Activated naive CD4-positive, alpha-beta T cell treated with anti-CD3 and anti-CD28 coated beads for 36 hours (primary cell): ENCODE measurements at regions of chr14 and their contacts with region 1.

Region 1: DNA sequence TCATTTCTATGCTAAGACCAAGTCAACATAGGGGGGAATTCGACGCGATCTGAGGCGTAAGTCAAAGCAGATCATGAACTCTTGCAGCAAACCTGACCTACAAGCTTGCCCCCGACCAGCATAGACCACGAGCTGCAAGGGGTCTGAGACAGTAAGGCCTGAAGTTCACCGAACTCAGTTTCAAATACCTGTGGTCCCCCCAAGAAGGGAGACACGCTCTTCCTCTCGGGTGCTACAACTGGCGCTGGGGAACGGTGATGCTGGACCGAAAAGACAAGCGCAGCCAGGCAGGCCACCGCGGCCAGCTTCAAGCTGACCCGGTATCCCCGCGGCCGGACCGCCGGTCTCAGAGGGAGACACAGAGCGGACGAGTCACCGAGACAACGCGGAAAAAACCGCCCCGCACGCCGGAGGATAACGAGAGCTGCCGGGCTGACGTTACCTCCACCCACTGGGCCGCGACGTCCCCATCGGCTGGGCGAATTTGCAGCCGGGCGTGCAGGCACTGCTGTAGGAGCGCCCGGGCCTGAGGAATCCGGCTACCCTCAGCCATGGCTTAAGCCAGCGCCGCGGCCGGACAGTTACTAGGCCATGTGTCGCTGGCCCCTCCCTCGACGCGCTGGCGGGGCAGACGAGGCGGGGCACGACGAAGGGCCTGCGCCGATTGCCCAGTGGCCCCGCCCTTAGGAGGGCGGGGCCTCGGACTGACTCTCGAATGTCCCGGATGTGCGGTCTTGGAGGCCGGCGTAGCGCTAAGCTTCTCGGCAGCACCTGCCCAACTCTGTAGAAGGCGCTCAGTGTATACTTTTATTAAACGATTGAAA is at the start of gene DTD2:
- DNase-seq: peak; percentile 93
- H3K4me3 Mint-ChIP-seq: peak within 1 kb of the TSS; percentile 94
- H3K27ac Mint-ChIP-seq: peak within 1 kb of the TSS; percentile 88
- H3K4me1 Mint-ChIP-seq: peaks cover 29% of the 10 kb centered on the region
- H3K27me3 Mint-ChIP-seq: no peaks in the 10 kb centered on the region
- total RNA-seq, gene DTD2: 12.9 to 13.3 TPM

Region 2: DNA sequence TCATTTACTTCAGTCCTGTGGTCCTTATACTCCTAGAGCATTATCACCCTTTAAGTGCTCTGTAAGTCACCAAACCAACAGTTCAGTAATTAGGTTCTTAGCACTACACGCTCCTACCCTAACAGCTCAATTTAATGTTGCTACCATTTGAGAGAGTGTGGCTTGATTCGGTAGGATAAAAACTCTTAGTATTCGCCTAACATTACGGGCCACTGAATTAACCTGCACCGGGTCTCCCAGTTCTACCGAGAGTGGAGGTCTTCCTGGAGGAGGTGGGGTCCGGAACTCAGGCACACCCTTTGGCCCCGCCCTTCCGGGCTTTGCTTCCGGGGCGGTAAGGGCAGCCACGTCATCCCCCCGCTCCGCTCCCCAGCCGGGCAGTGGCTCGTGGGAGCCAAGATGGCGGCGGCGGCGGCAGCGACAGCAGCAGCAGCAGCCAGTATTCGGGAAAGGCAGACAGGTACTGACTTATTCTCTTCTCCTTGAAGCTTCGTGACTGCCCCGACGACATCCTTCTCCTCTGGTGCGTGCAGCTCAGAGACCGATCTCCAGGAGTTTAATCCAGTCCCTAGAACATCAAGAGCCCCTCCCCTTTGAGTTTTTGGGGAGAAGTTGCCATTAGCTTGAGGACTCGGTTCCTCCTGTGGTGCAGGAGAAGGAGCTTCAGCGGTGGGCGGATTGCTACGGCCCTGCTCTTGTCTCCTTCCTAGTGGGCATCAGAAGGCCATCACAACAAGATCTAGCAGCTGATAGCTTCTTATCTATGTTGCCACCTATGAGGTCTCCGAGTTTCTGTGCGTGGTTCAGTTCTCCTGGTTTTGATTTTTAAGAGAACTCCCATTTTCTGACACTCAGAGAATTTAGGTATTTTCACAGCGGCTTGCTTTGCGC is 834.9 kb before region 1 on chr14 and contains the start of gene SCFD1:
- CTCF ChIA-PET with region 1: no interaction called
- intact Hi-C with region 1: loop called (anchors 1 kb)
- DNase-seq: peak; percentile 95
- H3K4me3 Mint-ChIP-seq: peak within 1 kb of the TSS; percentile 96
- H3K27ac Mint-ChIP-seq: peak within 1 kb of the TSS; percentile 94
- H3K4me1 Mint-ChIP-seq: peaks cover 35% of the 10 kb centered on the region
- H3K27me3 Mint-ChIP-seq: no peaks in the 10 kb centered on the region
- total RNA-seq, gene SCFD1: 46.1 to 55.2 TPM

Region 3: GRCh38 chr14:30982533-30982932 is 474.5 kb before region 1 on chr14:
- CTCF ChIA-PET with region 1: no interaction called
- intact Hi-C with region 1: loop called (anchors 5 kb)
- DNase-seq: no peak
- H3K4me3 Mint-ChIP-seq: no peak overlapping the region
- H3K27ac Mint-ChIP-seq: no peak overlapping the region
- H3K4me1 Mint-ChIP-seq: peaks cover 16% of the 10 kb centered on the region
- H3K27me3 Mint-ChIP-seq: no peaks in the 10 kb centered on the region

Region 4: DNA sequence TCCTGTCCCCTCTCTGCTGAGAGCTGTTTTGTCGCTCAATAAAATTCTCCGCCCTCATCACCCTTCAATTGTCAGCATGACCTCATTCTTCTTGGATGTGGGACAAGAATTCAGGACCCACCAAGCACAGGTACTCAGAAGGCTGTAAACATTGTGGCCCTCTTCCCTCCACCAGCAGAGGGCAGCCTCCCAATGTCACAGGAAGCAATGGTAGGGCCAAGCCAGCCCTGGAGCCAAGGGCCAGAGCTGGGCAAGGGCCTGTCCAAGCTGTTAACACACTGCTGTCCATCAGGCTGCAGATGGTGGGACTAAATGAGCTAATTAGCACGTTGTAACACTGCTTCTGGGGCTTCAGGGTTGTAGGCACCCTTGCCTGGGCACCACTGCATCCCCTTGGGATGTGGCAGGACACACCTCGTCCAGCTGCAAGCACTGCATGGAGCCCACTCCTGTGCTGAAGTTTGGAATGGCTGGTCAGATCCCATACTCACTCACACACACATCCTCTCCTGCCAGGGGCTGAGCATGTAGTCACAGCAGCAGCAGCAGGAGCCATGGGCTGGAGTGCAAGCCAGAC is 186.8 kb before region 1 on chr14:
- CTCF ChIA-PET with region 1: interaction called, 3 read pairs
- intact Hi-C with region 1: loop called (anchors 5 kb)
- DNase-seq: peak; percentile 33
- H3K4me3 Mint-ChIP-seq: no peak overlapping the region
- H3K27ac Mint-ChIP-seq: no peak overlapping the region
- H3K4me1 Mint-ChIP-seq: peaks cover 7% of the 10 kb centered on the region
- H3K27me3 Mint-ChIP-seq: no peaks in the 10 kb centered on the region

Region 5: DNA sequence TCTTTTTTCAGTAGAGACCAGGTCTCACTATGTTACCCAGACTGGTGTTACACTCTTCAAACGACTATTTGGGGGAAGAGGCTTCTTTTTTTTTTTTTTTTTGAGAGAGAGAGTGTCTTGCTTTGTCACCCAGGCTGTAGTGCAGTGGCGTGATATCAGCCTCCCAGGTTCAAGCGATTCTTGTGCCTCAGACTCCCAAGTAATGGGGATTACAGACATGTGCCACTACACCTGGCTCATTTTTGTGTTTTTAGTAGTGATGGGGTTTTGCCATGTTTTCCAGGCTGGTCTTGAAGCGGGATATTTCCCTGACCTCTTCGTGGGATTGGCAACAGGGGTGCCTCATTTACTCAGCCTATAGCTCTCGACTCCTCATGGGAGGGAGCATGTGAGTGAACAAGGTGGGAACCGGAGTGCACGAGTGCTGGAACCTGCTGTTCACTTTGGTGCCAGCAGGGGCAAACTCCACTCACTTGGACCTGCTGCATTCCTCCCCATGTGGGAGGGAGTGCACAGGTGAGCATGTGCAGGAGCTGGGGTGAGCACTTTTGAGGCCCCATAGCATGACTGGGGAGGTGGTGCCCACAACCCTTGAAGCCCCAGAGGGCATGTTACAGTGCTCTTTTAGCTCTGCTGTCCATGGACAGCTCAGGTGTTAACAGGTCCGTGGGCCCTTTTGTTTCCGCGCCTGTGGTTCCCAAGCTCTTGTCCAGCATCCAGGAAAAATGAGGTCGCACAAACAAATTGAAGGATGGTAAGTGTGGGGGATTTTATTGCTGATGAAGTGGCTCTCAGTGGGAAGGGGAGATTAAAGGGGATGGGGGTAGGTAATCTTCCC is 170.4 kb before region 1 on chr14:
- CTCF ChIA-PET with region 1: no interaction called
- intact Hi-C with region 1: no loop called
- DNase-seq: no peak
- H3K4me3 Mint-ChIP-seq: no peak overlapping the region
- H3K27ac Mint-ChIP-seq: no peak overlapping the region
- H3K4me1 Mint-ChIP-seq: peaks cover 4% of the 10 kb centered on the region
- H3K27me3 Mint-ChIP-seq: no peaks in the 10 kb centered on the region

Region 6: DNA sequence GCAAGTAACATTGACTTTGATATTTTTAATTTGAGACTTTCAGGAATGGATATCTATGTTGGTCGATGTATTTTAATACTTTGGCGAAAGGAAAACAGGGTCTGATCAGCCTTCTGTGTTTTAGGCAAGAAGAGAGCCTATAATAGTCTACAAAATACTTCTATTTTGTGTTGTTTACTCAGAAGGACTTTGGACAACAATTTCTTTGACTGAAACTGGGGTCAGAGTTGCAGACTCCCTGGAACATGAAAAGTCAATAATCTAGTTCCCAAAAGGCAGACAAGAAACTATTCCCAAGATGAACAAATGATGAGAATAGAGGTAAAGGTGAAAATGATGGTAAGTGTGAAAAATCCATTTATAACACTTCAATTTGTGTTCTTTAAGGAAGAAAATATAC is 93.5 kb after region 1 on chr14:
- CTCF ChIA-PET with region 1: no interaction called
- intact Hi-C with region 1: no loop called
- DNase-seq: no peak
- H3K4me3 Mint-ChIP-seq: no peak overlapping the region
- H3K27ac Mint-ChIP-seq: no peak overlapping the region
- H3K4me1 Mint-ChIP-seq: no peaks in the 10 kb centered on the region
- H3K27me3 Mint-ChIP-seq: peaks cover 36% of the 10 kb centered on the region

Region 7: DNA sequence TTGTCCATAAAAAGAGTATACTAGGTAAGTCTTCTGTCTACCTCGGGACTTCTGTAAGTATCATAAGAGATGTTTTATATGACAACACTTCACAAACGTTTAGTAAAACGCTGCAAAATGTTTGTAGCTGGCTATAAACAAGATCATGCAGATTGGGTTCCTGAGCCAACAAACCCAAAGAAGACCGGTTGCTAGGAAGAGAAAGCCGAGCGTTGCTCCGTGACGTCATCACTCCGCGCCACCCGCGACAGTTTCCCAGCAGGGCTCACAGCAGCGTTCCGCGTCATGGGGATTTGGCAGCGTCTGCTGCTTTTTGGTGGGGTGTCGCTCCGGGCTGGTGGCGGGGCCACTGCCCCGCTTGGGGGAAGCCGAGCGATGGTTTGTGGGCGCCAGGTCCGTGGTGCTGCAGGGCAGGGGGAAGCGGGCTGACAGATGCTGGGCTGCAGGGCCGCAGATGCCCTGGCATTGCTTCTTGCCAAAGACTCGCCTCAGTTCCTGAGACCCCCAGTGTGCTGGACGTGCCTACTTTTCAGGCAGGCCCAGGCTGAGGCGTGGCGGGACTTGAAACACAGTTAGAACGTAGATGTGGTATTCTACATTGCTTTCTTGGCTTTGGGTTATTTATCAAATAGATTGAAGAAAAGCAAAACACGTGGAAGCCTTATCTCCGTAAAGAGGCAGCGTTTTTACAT is 104.2 kb after region 1 on chr14 and contains the start of gene NUBPL:
- CTCF ChIA-PET with region 1: no interaction called
- intact Hi-C with region 1: loop called (anchors 1 kb)
- DNase-seq: peak; percentile 98
- H3K4me3 Mint-ChIP-seq: peak within 1 kb of the TSS; percentile 96
- H3K27ac Mint-ChIP-seq: peak within 1 kb of the TSS; percentile 92
- H3K4me1 Mint-ChIP-seq: peaks cover 23% of the 10 kb centered on the region
- H3K27me3 Mint-ChIP-seq: no peaks in the 10 kb centered on the region
- total RNA-seq, gene NUBPL: 11.5 to 13.5 TPM

Region 8: DNA sequence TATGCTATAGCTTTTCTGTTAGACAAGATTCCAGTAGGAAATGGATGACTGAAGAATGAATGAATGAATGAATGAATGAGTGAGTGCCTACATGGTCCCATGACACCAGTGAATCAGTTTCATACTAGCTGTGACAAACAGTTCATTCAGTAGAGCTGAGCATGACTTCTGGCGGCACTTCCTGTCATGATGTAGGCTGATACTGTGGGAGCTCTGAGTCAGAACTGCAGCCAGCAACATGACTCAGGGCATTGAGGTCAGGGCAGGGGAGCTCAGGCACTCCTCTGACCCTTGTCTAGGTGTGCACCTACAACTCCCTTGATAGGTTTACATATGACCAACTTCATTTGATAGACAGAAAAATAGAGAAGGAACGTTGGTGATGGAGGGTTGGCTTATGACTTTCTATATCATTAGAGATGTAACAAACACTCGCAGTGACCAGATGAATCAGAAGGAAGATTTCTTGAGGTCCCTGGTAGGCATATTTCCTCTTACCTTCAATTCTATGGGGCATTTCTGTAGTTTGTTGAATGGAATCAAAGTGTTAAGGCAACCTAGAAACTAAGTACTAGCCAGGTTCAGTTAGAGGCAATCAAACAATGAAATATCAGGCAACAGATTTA is 480.8 kb after region 1 on chr14:
- CTCF ChIA-PET with region 1: no interaction called
- intact Hi-C with region 1: loop called (anchors 5 kb)
- DNase-seq: peak; percentile 89
- H3K4me3 Mint-ChIP-seq: no peak overlapping the region
- H3K27ac Mint-ChIP-seq: peak overlapping the region; percentile 20
- H3K4me1 Mint-ChIP-seq: peaks cover 20% of the 10 kb centered on the region
- H3K27me3 Mint-ChIP-seq: no peaks in the 10 kb centered on the region